Heart right ventricle (tissue), 16 donors: ENCODE measurements at regions of chr10 and their contacts with region 1.

Region 1: DNA sequence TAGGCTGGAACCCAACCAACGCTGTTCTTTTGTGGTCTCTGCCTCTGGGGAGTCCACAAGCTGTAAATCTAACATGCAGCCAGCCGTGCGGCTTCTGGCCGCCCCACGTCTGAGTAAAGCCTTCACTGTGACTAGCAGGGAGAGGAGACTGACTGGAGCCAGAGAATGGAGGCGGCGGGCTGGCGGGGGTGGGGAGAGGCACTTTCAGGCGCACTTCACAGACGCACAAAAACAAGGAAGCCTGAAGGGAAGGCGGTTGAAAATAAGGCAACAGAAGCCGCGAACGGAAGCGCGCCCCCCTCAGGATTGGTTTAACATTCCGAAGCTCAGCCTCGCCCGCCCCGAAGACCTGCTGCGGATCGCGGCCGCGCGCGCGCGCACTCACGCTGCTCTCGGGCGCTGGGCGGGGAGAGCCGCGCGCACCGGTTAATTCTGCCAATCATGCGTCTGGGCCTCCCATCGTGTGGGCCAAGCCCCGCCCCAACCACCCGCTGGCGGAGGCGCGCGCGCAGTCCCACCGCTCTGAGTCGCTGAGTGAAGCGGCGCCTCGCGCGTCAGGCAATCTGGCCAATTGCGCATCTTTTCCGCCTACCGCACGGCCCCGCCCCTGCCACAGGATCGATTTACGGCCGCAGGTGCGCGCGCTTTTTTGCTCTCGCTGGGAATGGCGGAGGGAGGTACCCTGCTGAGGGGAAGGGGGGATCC is at the start of gene SFR1:
- DNase-seq: peak; percentile 98 to 99
- ATAC-seq: peak; percentile 95 to 99 (median 97)
- H3K4me3 ChIP-seq: peak within 1 kb of the TSS; percentile 61 to 88 (median 78)
- H3K27ac ChIP-seq: peak within 1 kb of the TSS; percentile 89 to 100 (median 98)
- H3K4me1 ChIP-seq: peaks cover 0 to 24% (median 12%) of the 10 kb centered on the region in 9 donors
- H3K27me3 ChIP-seq: no peaks in the 10 kb centered on the region
- CTCF ChIP-seq: peak; percentile 25 to 81 (median 66)
- total RNA-seq, gene SFR1: 4.4 to 10.4 (median 6.7) TPM

Region 2: GRCh38 chr10:103225939-103226338 is 895.7 kb before region 1 on chr10:
- intact Hi-C with region 1: no loop called
- DNase-seq: no peak
- ATAC-seq: no peak
- H3K4me3 ChIP-seq: no peak overlapping the region
- H3K27ac ChIP-seq: peak overlapping the region in 1 of 10 donors; percentile 56
- H3K4me1 ChIP-seq: peaks cover 6 to 45% (median 13%) of the 10 kb centered on the region in 9 donors
- H3K27me3 ChIP-seq: no peaks in the 10 kb centered on the region
- CTCF ChIP-seq: no peak

Region 3: DNA sequence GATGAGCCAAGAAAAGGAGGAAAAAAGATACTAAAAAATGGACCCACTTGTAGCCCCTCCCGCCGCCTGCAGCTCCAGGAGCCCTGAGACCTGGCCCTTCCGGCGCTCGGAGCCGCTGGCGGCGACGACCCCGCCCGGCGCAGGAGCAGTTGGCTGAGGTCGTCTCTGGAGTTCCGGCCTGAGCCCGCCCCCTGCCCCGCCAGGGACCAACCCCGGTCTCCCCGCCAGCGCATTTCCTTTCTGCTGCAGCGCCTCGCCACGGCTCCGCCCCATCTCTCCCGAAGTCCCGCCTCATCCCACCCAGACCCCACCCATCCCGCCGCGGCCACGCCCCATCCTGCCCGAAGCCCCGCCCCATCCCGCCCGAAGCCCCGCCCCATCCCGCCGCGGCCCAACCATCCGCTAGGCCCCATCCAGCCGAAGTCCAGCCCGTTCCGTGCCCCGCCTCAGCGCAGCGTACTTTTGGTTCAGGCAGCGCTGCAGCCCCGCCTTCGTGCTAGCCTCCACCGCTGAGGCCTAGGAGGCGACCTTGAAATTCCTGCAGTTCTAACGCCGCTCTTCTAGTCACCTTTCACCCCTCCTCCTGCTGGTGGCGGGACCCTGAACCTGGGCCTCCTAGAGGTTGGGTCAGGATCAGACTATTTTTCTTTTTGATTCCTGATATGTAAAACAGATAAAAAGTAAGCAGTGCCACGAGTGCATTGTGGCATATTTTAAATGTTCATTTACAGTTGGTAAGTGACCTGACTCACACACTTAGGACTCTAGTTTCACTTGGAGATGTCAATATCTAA is 203.4 kb before region 1 on chr10 and contains the start of gene STN1:
- intact Hi-C with region 1: loop called in 1 of 10 experiments (anchors 5 kb)
- DNase-seq: peak; percentile 97 to 99
- ATAC-seq: peak; percentile 97 to 99 (median 98)
- H3K4me3 ChIP-seq: peak within 1 kb of the TSS; percentile 48 to 88 (median 79)
- H3K27ac ChIP-seq: peak within 1 kb of the TSS; percentile 92 to 99 (median 96)
- H3K4me1 ChIP-seq: peaks cover 10 to 51% (median 34%) of the 10 kb centered on the region in 9 donors
- H3K27me3 ChIP-seq: no peaks in the 10 kb centered on the region
- CTCF ChIP-seq: peak in 3 of 9 donors; percentile 5 to 13 (median 10)
- total RNA-seq, gene STN1: 24.7 to 38.7 (median 31.4) TPM

Region 4: GRCh38 chr10:104028146-104028545 is 93.5 kb before region 1 on chr10:
- intact Hi-C with region 1: loop called in 4 of 10 experiments (anchors 2 to 5 kb)
- DNase-seq: peak in 1 of 2 donors; percentile 41
- ATAC-seq: peak; percentile 83 to 92 (median 86)
- H3K4me3 ChIP-seq: no peak overlapping the region
- H3K27ac ChIP-seq: peak overlapping the region in 7 of 10 donors; percentile 49 to 89 (median 83)
- H3K4me1 ChIP-seq: peaks cover 3 to 49% (median 13%) of the 10 kb centered on the region in 9 donors
- H3K27me3 ChIP-seq: no peaks in the 10 kb centered on the region
- CTCF ChIP-seq: peak; percentile 7 to 65 (median 44)

Region 5: GRCh38 chr10:104076743-104077160 is 44.9 kb before region 1 on chr10:
- intact Hi-C with region 1: loop called in 1 of 10 experiments (anchors 2 kb)
- DNase-seq: peak; percentile 28 to 82
- ATAC-seq: peak; percentile 71 to 95 (median 92)
- H3K4me3 ChIP-seq: no peak overlapping the region
- H3K27ac ChIP-seq: peak overlapping the region in 8 of 10 donors; percentile 25 to 76 (median 46)
- H3K4me1 ChIP-seq: peaks cover 0 to 18% (median 12%) of the 10 kb centered on the region in 9 donors
- H3K27me3 ChIP-seq: no peaks in the 10 kb centered on the region
- CTCF ChIP-seq: no peak

Region 6: DNA sequence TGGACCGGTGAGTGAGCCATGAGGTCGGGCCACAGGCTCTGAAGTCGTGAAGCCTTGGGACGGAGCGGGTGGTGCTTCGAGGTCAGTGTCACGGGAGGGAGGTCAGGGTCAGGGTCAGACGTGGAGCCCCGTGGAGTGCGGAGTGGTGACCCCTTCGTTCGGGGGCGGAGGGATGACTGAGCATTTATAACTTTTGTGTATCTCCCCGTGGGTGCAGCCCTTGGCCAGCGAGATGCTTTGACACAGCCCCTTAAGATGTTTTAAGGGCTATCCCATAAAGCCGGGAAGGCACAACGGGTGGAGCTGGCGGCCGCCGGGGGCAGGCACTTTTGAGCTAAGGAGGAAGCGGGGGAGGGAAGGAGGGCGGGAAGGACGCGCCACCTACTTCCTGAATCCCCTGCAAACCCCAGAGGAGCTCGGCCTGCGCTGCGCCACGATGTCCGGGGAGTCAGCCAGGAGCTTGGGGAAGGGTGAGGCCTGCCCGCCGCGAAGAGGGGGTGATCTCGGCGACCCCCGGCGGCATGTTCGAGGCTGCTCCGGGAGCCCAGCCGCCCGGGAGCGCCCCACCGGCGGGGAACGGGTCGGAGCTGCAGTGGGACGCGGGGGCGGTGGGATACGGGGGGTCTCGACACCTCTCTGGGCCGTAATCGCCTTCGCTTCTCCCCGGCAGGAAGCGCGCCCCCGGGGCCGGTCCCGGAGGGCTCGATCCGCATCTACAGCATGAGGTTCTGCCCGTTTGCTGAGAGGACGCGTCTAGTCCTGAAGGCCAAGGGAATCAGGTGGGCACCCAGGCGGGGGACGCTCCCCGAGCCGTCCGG is 133.0 kb after region 1 on chr10 and contains the start of gene GSTO1:
- intact Hi-C with region 1: loop called in 3 of 10 experiments (anchors 5 to 10 kb)
- DNase-seq: peak; percentile 84 to 86
- ATAC-seq: peak; percentile 88 to 93 (median 92)
- H3K4me3 ChIP-seq: peak within 1 kb of the TSS; percentile 88 to 99 (median 94)
- H3K27ac ChIP-seq: peak within 1 kb of the TSS; percentile 96 to 100 (median 99)
- H3K4me1 ChIP-seq: peaks cover 8 to 51% (median 37%) of the 10 kb centered on the region in 9 donors
- H3K27me3 ChIP-seq: no peaks in the 10 kb centered on the region
- CTCF ChIP-seq: peak in 3 of 9 donors; percentile 10 to 20 (median 16)
- total RNA-seq, gene GSTO1: 161 to 372 (median 220) TPM

Region 7: GRCh38 chr10:104642658-104643302 is 521.1 kb after region 1 on chr10:
- intact Hi-C with region 1: no loop called
- DNase-seq: peak; percentile 14 to 39
- ATAC-seq: peak in 7 of 8 donors; percentile 33 to 66 (median 41)
- H3K4me3 ChIP-seq: peak overlapping the region in 3 of 10 donors; percentile 8 to 15 (median 12)
- H3K27ac ChIP-seq: no peak overlapping the region
- H3K4me1 ChIP-seq: peaks cover 0 to 23% (median 8%) of the 10 kb centered on the region in 9 donors
- H3K27me3 ChIP-seq: peaks cover 10 to 98% (median 84%) of the 10 kb centered on the region in 7 donors
- CTCF ChIP-seq: peak in 8 of 9 donors; percentile 18 to 50 (median 36)

Region 8: DNA sequence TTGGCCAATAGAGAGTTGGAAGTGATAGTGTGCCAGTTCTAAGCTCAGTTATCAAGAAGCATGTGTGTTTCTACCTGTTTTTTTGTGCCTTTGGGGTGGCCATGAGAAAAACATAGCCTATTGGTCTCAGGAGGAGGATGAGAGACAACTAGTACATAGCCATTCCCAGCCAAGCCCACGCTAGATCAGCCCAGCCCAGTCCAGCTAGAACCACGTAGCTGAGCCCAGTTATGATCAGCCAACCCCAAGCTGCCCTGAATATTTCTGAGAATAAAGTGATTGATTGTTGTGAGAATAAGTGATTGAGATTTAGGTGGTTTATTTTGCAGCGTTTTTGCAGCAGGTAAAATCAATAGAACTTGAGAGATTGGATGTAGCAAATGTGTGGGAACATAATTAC is 535.4 kb after region 1 on chr10:
- intact Hi-C with region 1: no loop called
- DNase-seq: no peak
- ATAC-seq: no peak
- H3K4me3 ChIP-seq: no peak overlapping the region
- H3K27ac ChIP-seq: no peak overlapping the region
- H3K4me1 ChIP-seq: no peaks in the 10 kb centered on the region
- H3K27me3 ChIP-seq: peaks cover 0 to 18% (median 14%) of the 10 kb centered on the region in 7 donors
- CTCF ChIP-seq: no peak